ENCODE measurements at regions of chr6 and their contacts with region 1.

Region 1: GRCh38 chr6:154805288-154805911 is 72.2 kb downstream of the SCAF8 start:
- DNase-seq: peak; percentile 41
- ATAC-seq: no peak
- H3K4me3 ChIP-seq: no peak overlapping the region
- H3K27ac ChIP-seq: no peak overlapping the region
- H3K4me1 ChIP-seq: no peaks in the 10 kb centered on the region
- H3K27me3 ChIP-seq: no peaks in the 10 kb centered on the region
- CTCF ChIP-seq: peak; percentile 57

Region 2: GRCh38 chr6:154579485-154579884 is 225.9 kb before region 1 on chr6:
- CTCF ChIA-PET with region 1: no interaction called
- POLR2A ChIA-PET with region 1: no interaction called
- intact Hi-C with region 1: no loop called
- DNase-seq: peak; percentile 53
- ATAC-seq: no peak; the same call in 1 of the 2 replicates
- H3K4me3 ChIP-seq: no peak overlapping the region
- H3K27ac ChIP-seq: peak overlapping the region; percentile 85
- H3K4me1 ChIP-seq: peaks cover 20% of the 10 kb centered on the region
- H3K27me3 ChIP-seq: no peaks in the 10 kb centered on the region
- CTCF ChIP-seq: no peak

Region 3: GRCh38 chr6:154675602-154676088 is 129.8 kb before region 1 on chr6:
- CTCF ChIA-PET with region 1: interaction called, 27 read pairs
- POLR2A ChIA-PET with region 1: no interaction called
- intact Hi-C with region 1: loop called (anchors 1 kb)
- DNase-seq: peak; percentile 96
- ATAC-seq: peak; percentile 99
- H3K4me3 ChIP-seq: no peak overlapping the region
- H3K27ac ChIP-seq: no peak overlapping the region
- H3K4me1 ChIP-seq: no peaks in the 10 kb centered on the region
- H3K27me3 ChIP-seq: no peaks in the 10 kb centered on the region
- CTCF ChIP-seq: peak; percentile 99

Region 4: GRCh38 chr6:154766288-154766687 is 39.1 kb before region 1 on chr6:
- CTCF ChIA-PET with region 1: no interaction called
- POLR2A ChIA-PET with region 1: no interaction called
- intact Hi-C with region 1: no loop called
- DNase-seq: no peak
- ATAC-seq: no peak
- H3K4me3 ChIP-seq: no peak overlapping the region
- H3K27ac ChIP-seq: no peak overlapping the region
- H3K4me1 ChIP-seq: no peaks in the 10 kb centered on the region
- H3K27me3 ChIP-seq: no peaks in the 10 kb centered on the region
- CTCF ChIP-seq: no peak